Activated naive CD4-positive, alpha-beta T cell treated with anti-CD3 and anti-CD28 coated beads for 36 hours (primary cell): ENCODE measurements at regions of chr18 and their contacts with region 1.

Region 1: GRCh38 chr18:62714671-62715435 is 488 bp upstream of the PHLPP1 start:
- DNase-seq: peak; percentile 98
- H3K4me3 Mint-ChIP-seq: peak overlapping the region; percentile 79
- H3K27ac Mint-ChIP-seq: peak overlapping the region; percentile 74
- H3K4me1 Mint-ChIP-seq: peaks cover 26% of the 10 kb centered on the region
- H3K27me3 Mint-ChIP-seq: peaks cover 6% of the 10 kb centered on the region

Region 2: GRCh38 chr18:62425465-62426195 is 289.2 kb before region 1 on chr18:
- CTCF ChIA-PET with region 1: interaction called, 3 read pairs
- intact Hi-C with region 1: loop called (anchors 1 kb)
- DNase-seq: peak; percentile 80
- H3K4me3 Mint-ChIP-seq: peak overlapping the region; percentile 3
- H3K27ac Mint-ChIP-seq: peak overlapping the region; percentile 19
- H3K4me1 Mint-ChIP-seq: peaks cover 22% of the 10 kb centered on the region
- H3K27me3 Mint-ChIP-seq: no peaks in the 10 kb centered on the region

Region 3: DNA sequence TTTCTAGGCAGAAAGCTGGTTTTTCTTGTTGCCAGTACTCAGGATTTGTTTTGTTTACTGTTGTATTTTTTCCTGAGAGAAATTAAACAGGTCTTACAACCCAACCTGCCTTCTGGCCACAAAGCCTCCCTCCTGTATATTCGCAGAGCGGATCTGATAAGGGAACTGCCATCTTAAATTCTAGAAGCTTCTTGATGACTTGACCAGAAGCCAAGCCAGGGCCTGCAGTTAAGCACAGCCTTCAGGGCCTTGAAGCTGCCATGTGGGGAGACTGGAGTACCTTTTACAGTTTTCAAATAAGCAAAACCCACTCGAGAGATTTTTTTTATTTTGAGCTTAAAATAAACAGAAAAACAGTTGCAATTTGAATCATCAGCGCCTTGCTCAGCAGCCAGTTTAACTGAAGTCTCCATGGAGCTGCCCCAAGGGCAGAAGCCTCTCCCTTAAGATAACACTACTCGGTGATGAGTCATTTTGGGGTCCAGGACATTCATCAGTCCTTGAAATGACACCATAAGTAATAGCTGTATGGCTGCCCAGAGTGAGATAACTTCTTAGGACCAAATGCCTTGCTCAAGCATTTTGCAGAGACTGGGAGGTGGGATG is 51.0 kb before region 1 on chr18:
- CTCF ChIA-PET with region 1: no interaction called
- intact Hi-C with region 1: no loop called
- DNase-seq: no peak
- H3K4me3 Mint-ChIP-seq: no peak overlapping the region
- H3K27ac Mint-ChIP-seq: no peak overlapping the region
- H3K4me1 Mint-ChIP-seq: no peaks in the 10 kb centered on the region
- H3K27me3 Mint-ChIP-seq: no peaks in the 10 kb centered on the region

Region 4: GRCh38 chr18:62741118-62741566 is 26.3 kb after region 1 on chr18:
- CTCF ChIA-PET with region 1: interaction called, 4 read pairs
- intact Hi-C with region 1: loop called (anchors 1 kb)
- DNase-seq: peak; percentile 66
- H3K4me3 Mint-ChIP-seq: no peak overlapping the region
- H3K27ac Mint-ChIP-seq: no peak overlapping the region
- H3K4me1 Mint-ChIP-seq: peaks cover 16% of the 10 kb centered on the region
- H3K27me3 Mint-ChIP-seq: no peaks in the 10 kb centered on the region

Region 5: DNA sequence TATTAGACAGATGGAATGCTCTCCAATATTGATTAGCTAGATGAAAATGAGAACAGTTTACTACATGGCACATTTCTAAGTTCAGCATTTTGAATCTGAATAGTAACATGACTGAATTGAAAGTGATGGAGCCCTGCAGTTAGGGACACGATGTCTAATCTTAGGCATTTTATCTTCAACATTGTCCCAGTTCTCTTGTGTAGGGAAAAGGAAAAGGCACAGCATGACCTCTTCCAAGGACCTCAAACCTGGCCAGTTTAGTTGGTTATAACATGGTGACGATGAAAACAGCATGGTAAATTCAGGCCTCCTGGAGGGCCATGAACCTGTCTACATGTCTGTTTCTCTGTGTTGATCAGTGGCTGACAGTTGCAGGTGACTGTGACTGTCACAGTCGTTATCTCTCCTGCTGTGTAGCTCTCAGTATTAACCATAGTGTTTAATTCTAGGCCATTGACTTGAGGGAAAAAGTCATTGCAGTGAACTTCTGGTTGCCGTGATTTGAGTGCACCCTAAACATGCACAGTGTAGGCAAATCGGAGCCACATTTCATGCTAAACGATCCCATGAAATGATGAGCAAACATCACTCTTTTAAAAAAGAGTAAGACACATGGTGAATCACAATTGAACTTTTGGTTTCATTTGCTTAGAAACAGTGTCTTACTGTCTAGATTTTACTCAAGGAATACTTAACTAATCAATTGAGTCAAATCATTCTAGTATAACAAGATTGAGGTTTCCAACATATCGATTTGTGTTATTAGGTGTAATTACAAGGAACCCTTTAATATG is 130.2 kb after region 1 on chr18:
- CTCF ChIA-PET with region 1: no interaction called
- intact Hi-C with region 1: loop called (anchors 1 kb)
- DNase-seq: peak; percentile 57
- H3K4me3 Mint-ChIP-seq: no peak overlapping the region
- H3K27ac Mint-ChIP-seq: peak overlapping the region; percentile 24
- H3K4me1 Mint-ChIP-seq: peaks cover 24% of the 10 kb centered on the region
- H3K27me3 Mint-ChIP-seq: no peaks in the 10 kb centered on the region

Region 6: DNA sequence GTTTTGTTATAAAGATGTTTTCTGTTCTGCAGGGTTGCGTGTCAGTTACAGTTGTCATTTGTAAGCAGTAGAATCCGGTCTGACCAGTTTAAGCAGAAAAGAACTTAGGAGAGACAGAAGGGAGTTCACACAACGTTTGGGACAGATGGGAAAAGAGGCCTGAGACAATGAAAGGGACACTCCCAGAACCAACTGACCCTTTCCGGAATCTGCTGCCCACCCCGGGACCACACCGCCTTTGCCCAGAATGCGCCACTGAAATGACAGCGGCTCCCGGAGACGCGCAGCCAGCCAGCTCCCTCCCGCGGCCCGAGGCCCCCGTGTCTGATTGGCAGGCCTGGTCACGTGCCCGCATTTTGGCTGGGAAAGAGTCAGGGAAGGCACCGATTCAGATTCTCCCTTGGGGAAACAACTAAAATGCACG is 360.1 kb after region 1 on chr18:
- CTCF ChIA-PET with region 1: no interaction called
- intact Hi-C with region 1: loop called (anchors 2 kb)
- DNase-seq: peak; percentile 83
- H3K4me3 Mint-ChIP-seq: peak overlapping the region; percentile 79
- H3K27ac Mint-ChIP-seq: no peak overlapping the region
- H3K4me1 Mint-ChIP-seq: peaks cover 9% of the 10 kb centered on the region
- H3K27me3 Mint-ChIP-seq: peaks cover 2% of the 10 kb centered on the region

Region 7: DNA sequence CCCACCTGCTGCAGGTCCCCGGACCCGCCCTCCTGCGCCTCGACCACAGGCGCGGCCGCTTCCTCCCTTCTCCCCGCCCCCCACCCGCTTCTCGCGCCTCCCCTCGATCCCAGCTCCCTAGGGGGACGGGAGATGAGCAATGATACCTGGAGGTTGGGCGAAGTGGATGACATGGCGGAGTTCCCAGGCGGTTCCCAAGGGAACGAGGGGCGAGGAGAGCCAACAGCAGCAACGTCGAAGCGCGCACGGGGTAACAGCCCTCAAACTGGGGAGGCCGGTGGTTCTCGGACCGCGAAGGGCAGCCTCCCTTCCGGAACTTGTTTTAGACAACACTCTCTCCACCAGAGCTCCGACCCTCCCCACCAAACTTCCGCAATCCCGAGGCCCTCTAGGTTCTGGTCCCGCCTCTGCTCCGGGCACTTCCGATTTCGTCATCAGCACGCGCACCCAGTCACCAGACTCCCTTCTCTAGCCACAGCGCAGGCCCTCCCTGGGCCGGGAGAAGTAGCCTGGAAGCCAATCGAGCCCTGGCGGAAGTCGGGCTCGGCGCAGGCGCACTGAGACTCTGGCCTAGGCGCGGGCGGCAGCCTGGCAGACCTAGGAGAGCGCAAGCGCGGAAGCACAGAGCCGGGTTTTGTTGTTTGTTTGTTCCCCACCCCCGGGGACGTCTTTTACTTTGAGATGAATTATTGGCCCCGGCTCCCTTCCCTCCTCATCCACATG is 707.4 kb after region 1 on chr18 and contains the start of gene VPS4B:
- CTCF ChIA-PET with region 1: no interaction called
- intact Hi-C with region 1: loop called (anchors 1 kb)
- DNase-seq: peak; percentile 100
- H3K4me3 Mint-ChIP-seq: peak within 1 kb of the TSS; percentile 83
- H3K27ac Mint-ChIP-seq: peak within 1 kb of the TSS; percentile 95
- H3K4me1 Mint-ChIP-seq: peaks cover 28% of the 10 kb centered on the region
- H3K27me3 Mint-ChIP-seq: no peaks in the 10 kb centered on the region
- total RNA-seq, gene VPS4B: 28.7 to 30.1 TPM